CD8-positive, alpha-beta T cell (primary cell): ENCODE measurements at regions of chr2 and their contacts with region 1.

Region 1: DNA sequence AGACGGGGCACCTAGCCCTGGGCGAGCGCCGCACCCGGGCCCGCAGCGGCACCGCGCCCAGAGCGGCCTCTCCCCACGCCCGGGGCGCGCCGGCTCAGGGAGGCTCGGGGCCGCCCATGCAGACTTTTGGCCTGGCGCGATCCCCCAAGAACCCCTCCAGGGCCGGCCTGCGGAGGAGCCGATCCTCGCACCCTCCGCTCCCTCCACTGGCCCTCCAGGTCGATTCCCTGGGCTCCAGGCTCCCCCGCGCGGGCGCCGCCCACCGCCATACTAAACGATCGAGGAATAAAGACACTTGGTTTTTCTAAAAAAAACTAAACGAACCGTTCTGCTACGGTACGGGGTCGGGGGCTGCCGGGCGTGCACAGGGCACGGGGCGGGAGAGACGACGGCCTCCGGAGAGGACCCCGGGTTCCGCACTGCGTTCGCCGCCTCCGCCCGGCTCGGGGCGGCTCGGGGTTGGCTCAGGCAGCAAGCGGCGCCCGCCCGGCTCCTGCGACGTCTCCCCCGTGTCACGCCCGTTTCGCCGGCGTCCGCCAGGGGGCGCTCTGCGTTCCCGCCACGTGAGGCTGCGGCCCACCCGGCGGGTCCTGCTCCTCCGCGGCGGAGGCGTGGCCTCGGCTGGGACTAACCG is 365 bp upstream of the KHK start:
- DNase-seq: peak; percentile 94 to 100 (median 98)
- ATAC-seq: peak; percentile 89
- H3K4me3 ChIP-seq: peak overlapping the region; percentile 68 to 80
- H3K4me3 Mint-ChIP-seq: peak overlapping the region; percentile 83
- H3K27ac ChIP-seq: peak overlapping the region; percentile 78 to 82
- H3K27ac Mint-ChIP-seq: peak overlapping the region; percentile 80
- H3K4me1 ChIP-seq: peaks cover 28% of the 10 kb centered on the region
- H3K4me1 Mint-ChIP-seq: peaks cover 21% of the 10 kb centered on the region
- H3K27me3 ChIP-seq: no peaks in the 10 kb centered on the region
- H3K27me3 Mint-ChIP-seq: no peaks in the 10 kb centered on the region
- CTCF ChIP-seq: peak; percentile 81

Region 2: GRCh38 chr2:26959331-26959730 is 126.9 kb before region 1 on chr2:
- CTCF ChIA-PET with region 1: interaction called, 6 read pairs
- POLR2A ChIA-PET with region 1: no interaction called
- intact Hi-C with region 1: loop called (anchors 1 to 5 kb)
- DNase-seq: no peak
- ATAC-seq: no peak
- H3K4me3 ChIP-seq: no peak overlapping the region
- H3K4me3 Mint-ChIP-seq: no peak overlapping the region
- H3K27ac ChIP-seq: no peak overlapping the region
- H3K27ac Mint-ChIP-seq: no peak overlapping the region
- H3K4me1 ChIP-seq: no peaks in the 10 kb centered on the region
- H3K4me1 Mint-ChIP-seq: no peaks in the 10 kb centered on the region
- H3K27me3 ChIP-seq: peaks cover 0 to 2% of the 10 kb centered on the region in 2 experiments
- H3K27me3 Mint-ChIP-seq: peaks cover 35% of the 10 kb centered on the region
- CTCF ChIP-seq: no peak

Region 3: GRCh38 chr2:27032495-27033252 is 53.5 kb before region 1 on chr2 and contains the start of gene TMEM214:
- CTCF ChIA-PET with region 1: no interaction called
- POLR2A ChIA-PET with region 1: interaction called, 5 read pairs
- intact Hi-C with region 1: loop called (anchors 1 kb)
- DNase-seq: peak; percentile 44 to 87 (median 77)
- ATAC-seq: peak; percentile 94
- H3K4me3 ChIP-seq: peak within 1 kb of the TSS; percentile 84 to 97
- H3K4me3 Mint-ChIP-seq: peak within 1 kb of the TSS; percentile 95
- H3K27ac ChIP-seq: peak within 1 kb of the TSS; percentile 67 to 78
- H3K27ac Mint-ChIP-seq: peak within 1 kb of the TSS; percentile 91
- H3K4me1 ChIP-seq: peaks cover 20% of the 10 kb centered on the region
- H3K4me1 Mint-ChIP-seq: peaks cover 39% of the 10 kb centered on the region
- H3K27me3 ChIP-seq: no peaks in the 10 kb centered on the region
- H3K27me3 Mint-ChIP-seq: no peaks in the 10 kb centered on the region
- CTCF ChIP-seq: no peak
- total RNA-seq, gene TMEM214: 26.5 to 27.4 TPM

Region 4: GRCh38 chr2:27123302-27124231 is 37.4 kb after region 1 on chr2 and contains the start of gene ABHD1:
- CTCF ChIA-PET with region 1: interaction called, 4 read pairs
- POLR2A ChIA-PET with region 1: no interaction called
- intact Hi-C with region 1: loop called in 1 of 2 experiments (anchors 1 kb)
- DNase-seq: peak; percentile 19 to 82 (median 68)
- ATAC-seq: peak; percentile 83
- H3K4me3 ChIP-seq: peak within 1 kb of the TSS; percentile 41 to 68
- H3K4me3 Mint-ChIP-seq: peak within 1 kb of the TSS; percentile 92
- H3K27ac ChIP-seq: peak within 1 kb of the TSS in 1 of 2 experiments; percentile 62
- H3K27ac Mint-ChIP-seq: peak within 1 kb of the TSS; percentile 81
- H3K4me1 ChIP-seq: peaks cover 14% of the 10 kb centered on the region
- H3K4me1 Mint-ChIP-seq: peaks cover 22% of the 10 kb centered on the region
- H3K27me3 ChIP-seq: peaks cover under 1 to 4% of the 10 kb centered on the region in 2 experiments
- H3K27me3 Mint-ChIP-seq: peaks cover 13% of the 10 kb centered on the region
- CTCF ChIP-seq: no peak
- total RNA-seq, gene ABHD1: 0.67 to 1.0 TPM

Region 5: DNA sequence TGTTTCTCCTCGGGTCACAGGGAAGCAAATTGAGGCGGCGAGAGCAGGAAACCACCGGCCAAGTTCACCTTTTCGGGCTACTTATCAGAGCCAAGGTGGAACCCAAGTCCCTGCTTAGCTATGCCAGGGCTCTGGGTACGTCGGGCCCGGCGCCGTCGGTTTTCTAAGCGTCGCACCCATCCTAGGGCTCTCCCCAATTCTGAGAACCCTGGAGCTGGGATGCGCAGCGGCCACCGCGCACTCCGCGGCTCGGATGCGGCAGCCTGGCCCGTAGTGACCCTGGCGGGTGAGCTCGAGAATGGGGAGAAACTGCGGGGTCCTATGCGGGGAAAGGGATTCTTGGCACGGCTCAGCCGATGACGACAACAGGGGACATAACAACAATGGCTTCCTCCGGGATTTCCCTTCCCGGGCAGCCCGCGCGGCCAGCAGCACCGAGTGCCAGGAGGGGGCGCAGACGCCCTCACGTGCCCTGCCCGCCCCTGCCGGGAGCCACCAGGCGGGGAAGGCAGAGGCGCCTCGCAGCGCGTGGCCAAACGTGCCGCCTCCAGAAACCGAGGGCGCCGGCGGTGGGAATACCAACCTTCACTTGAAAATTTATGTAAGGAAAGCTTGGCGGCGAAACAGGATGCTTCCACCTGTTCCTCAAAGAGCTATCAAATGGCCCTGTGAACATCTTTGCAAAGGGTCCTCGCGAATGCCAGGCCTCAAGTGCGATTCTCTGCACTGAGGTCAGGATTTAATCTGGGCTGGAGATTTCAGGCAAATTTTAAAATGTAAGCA is 178.7 kb after region 1 on chr2:
- CTCF ChIA-PET with region 1: interaction called, 3 read pairs
- POLR2A ChIA-PET with region 1: no interaction called
- intact Hi-C with region 1: loop called in 1 of 2 experiments (anchors 5 kb)
- DNase-seq: peak; percentile 34 to 89 (median 64)
- ATAC-seq: peak; percentile 66
- H3K4me3 ChIP-seq: peak overlapping the region; percentile 48 to 55
- H3K4me3 Mint-ChIP-seq: peak overlapping the region; percentile 77
- H3K27ac ChIP-seq: no peak overlapping the region
- H3K27ac Mint-ChIP-seq: no peak overlapping the region
- H3K4me1 ChIP-seq: peaks cover 24% of the 10 kb centered on the region
- H3K4me1 Mint-ChIP-seq: peaks cover 26% of the 10 kb centered on the region
- H3K27me3 ChIP-seq: peaks cover 26 to 34% of the 10 kb centered on the region in 2 experiments
- H3K27me3 Mint-ChIP-seq: peaks cover 38% of the 10 kb centered on the region
- CTCF ChIP-seq: peak; percentile 54

Region 6: GRCh38 chr2:27855476-27855875 is 769.3 kb after region 1 on chr2:
- CTCF ChIA-PET with region 1: no interaction called
- POLR2A ChIA-PET with region 1: no interaction called
- intact Hi-C with region 1: no loop called
- DNase-seq: no peak
- ATAC-seq: no peak
- H3K4me3 ChIP-seq: no peak overlapping the region
- H3K4me3 Mint-ChIP-seq: no peak overlapping the region
- H3K27ac ChIP-seq: no peak overlapping the region
- H3K27ac Mint-ChIP-seq: no peak overlapping the region
- H3K4me1 ChIP-seq: no peaks in the 10 kb centered on the region
- H3K4me1 Mint-ChIP-seq: no peaks in the 10 kb centered on the region
- H3K27me3 ChIP-seq: no peaks in the 10 kb centered on the region
- H3K27me3 Mint-ChIP-seq: no peaks in the 10 kb centered on the region
- CTCF ChIP-seq: no peak